Tibial artery (tissue), 4 donors: ENCODE measurements at regions of chr11 and their contacts with region 1.

Region 1: GRCh38 chr11:43944761-43945311 is 2.4 kb downstream of the C11orf96 start:
- DNase-seq: peak; percentile 80 to 91
- H3K4me3 ChIP-seq: peak overlapping the region; percentile 94 to 96
- H3K27ac ChIP-seq: peak overlapping the region; percentile 98 to 99
- H3K4me1 ChIP-seq: peaks cover 0 to 53% (median 20%) of the 10 kb centered on the region in 4 donors
- H3K27me3 ChIP-seq: no peaks in the 10 kb centered on the region
- CTCF ChIP-seq: peak; percentile 85 to 93

Region 2: GRCh38 chr11:43895601-43896000 is 49.2 kb before region 1 on chr11:
- intact Hi-C with region 1: loop called (anchors 10 kb)
- DNase-seq: no peak
- H3K4me3 ChIP-seq: no peak overlapping the region
- H3K27ac ChIP-seq: peak overlapping the region in 1 of 2 donors; percentile 78
- H3K4me1 ChIP-seq: peaks cover 0 to 29% (median 0%) of the 10 kb centered on the region in 4 donors
- H3K27me3 ChIP-seq: no peaks in the 10 kb centered on the region
- CTCF ChIP-seq: no peak

Region 3: DNA sequence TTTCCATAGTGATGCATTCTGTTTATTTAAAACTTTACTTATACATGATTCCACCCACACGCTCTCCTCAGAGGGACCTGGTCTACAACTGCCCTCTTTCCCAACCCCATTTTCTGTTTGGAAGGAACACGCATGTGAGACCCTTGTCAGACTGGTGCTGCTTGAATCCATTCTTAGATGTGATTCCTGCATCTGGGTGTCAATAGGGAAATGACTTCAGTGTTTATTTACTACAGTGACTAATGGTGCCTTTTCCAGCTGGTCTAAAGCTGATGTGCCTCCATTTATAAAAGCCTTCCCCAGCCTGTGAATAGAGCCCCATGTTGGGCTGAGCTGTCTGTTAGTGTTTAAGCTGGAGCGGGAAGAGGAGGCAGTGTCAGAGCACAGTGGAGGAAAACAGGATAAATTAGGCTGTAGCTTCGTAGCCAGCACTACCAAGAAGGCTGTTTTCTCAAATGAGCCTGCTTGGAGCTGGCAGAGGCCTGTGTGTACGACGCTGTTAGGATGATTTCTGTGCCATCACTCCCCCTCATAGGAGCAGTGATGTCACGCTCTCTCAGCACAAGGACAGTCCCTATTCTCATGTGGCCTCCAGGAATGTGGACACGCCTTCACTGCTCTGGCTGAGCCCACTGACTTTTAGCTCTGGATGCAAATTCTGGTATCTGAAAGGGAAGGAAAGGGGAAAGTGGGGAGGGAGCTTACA is 21.3 kb before region 1 on chr11:
- intact Hi-C with region 1: loop called (anchors 2 kb)
- DNase-seq: peak; percentile 84 to 91
- H3K4me3 ChIP-seq: peak overlapping the region in 1 of 2 donors; percentile 0
- H3K27ac ChIP-seq: peak overlapping the region; percentile 95 to 98
- H3K4me1 ChIP-seq: peaks cover 0 to 87% (median 71%) of the 10 kb centered on the region in 4 donors
- H3K27me3 ChIP-seq: no peaks in the 10 kb centered on the region
- CTCF ChIP-seq: no peak

Region 4: GRCh38 chr11:44016131-44016530 is 71.3 kb after region 1 on chr11:
- intact Hi-C with region 1: no loop called
- DNase-seq: peak; percentile 88 to 97
- H3K4me3 ChIP-seq: no peak overlapping the region
- H3K27ac ChIP-seq: peak overlapping the region; percentile 78 to 80
- H3K4me1 ChIP-seq: peaks cover 0 to 82% (median 50%) of the 10 kb centered on the region in 4 donors
- H3K27me3 ChIP-seq: no peaks in the 10 kb centered on the region
- CTCF ChIP-seq: no peak

Region 5: DNA sequence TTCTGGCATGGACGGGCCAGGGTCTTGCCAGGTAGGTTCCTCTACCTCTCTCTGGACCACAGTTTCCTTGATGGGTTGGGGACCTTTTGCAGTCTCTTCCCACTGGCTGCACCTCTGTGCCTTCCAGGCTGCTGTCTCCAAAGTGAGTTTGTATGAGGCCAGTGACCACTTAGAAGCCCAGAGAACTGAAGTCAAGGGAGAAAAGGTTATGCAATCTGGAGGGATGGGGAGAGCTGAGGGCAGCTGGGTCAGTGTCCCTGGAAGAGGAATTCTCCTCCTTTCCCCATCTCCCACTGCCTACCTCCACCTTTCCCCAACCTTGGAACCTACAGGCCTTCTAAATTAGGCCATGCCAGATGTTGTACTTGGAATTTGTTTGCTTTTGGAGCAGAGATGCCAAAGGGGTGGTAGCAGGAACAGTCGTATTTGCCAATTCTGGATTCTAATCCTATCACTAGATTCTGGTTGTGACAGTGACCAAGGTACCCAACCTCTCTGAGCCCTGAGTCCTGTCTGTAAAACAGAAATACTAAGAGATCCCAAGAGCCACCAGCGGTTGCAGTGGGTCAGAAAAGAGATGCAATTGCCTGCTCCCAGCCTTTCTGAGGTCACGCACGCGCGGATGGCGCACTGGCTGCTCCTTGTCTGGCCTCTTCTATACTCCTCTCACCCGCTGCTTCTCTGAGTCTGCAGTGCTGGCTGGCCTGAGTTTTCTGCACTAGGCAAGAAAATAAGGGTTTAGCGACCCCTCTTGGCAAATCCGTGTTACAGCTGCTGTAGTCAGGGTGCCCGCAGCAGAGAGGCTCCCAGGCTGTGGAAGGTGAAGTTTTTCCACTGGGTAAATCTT is 92.2 kb after region 1 on chr11:
- intact Hi-C with region 1: loop called (anchors 2 kb)
- DNase-seq: peak; percentile 93 to 95
- H3K4me3 ChIP-seq: no peak overlapping the region
- H3K27ac ChIP-seq: peak overlapping the region; percentile 88 to 91
- H3K4me1 ChIP-seq: peaks cover 0 to 49% (median 27%) of the 10 kb centered on the region in 4 donors
- H3K27me3 ChIP-seq: no peaks in the 10 kb centered on the region
- CTCF ChIP-seq: peak; percentile 90 to 95